Caco-2 (cell line): ENCODE measurements at regions of chr5 and their contacts with region 1.

Region 1: DNA sequence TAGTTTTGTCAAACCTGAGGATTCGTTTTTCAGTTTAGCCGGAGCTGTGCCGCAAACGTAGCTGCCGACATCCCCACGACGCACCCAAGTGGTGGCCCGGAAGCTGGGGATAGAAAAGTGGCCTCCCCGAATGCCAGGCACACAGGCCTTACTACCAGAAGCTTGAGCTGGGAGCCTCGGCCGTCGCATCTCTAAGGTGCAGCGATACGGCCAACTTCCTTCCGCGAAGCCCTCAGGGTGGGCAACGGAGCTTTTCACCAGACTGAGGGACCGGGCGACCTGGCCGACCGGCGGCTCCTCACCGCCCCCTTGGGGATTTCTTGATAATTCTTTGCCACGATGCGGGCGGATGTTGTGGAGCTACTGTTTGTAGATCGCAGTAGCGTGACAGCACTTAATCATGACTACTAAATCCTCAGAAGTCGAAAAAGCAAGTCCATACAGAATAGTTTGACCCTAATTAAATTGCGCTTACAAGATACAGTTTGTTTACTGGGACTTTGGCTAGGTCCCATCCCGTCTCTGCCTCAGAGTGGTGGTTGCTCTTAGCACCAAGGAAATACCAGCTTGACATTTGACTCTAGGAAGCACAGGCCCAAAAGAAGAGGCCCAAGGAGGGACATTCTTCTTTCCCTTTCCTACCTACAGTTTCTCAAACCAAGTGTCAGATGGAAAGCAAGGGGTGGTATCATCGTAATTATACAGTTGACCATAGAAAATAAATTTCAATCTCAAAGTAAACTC is 613 bp upstream of the TMEM267 start:
- DNase-seq: peak; percentile 83 to 91
- H3K4me3 ChIP-seq: peak overlapping the region; percentile 81
- H3K4me3 Mint-ChIP-seq: peak overlapping the region; percentile 95
- H3K27ac Mint-ChIP-seq: peak overlapping the region; percentile 99
- H3K4me1 ChIP-seq: peaks cover 3% of the 10 kb centered on the region; the same call in 1 of the 2 replicates
- H3K4me1 Mint-ChIP-seq: peaks cover 11% of the 10 kb centered on the region
- H3K27me3 ChIP-seq: no peaks in the 10 kb centered on the region
- H3K27me3 Mint-ChIP-seq: no peaks in the 10 kb centered on the region
- CTCF ChIP-seq: peak; percentile 75 to 82

Region 2: DNA sequence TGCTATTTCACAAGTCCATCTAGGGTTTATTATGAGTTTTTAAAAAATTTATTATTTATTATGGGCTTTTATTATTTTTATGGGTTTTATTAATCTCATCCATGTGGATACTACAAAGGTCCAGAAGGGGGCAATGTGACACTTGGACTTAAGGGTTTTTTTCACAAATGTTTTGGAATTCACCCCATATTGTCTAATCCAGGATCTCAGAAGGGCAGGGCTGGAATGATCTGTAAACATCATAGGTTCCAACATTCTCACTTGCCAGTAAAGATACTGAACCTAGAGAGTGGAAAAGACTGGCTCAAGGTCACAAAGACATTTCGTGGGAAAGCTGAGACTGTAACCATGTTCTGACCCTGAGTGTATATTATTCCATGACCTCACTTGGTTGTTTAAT is 256.6 kb before region 1 on chr5:
- CTCF ChIA-PET with region 1: no interaction called
- POLR2A ChIA-PET with region 1: no interaction called
- intact Hi-C with region 1: loop called (anchors 2 kb)
- DNase-seq: peak in 1 of 2 experiments; percentile 43
- H3K4me3 ChIP-seq: no peak overlapping the region
- H3K4me3 Mint-ChIP-seq: no peak overlapping the region
- H3K27ac Mint-ChIP-seq: no peak overlapping the region
- H3K4me1 ChIP-seq: no peaks in the 10 kb centered on the region
- H3K4me1 Mint-ChIP-seq: no peaks in the 10 kb centered on the region
- H3K27me3 ChIP-seq: no peaks in the 10 kb centered on the region
- H3K27me3 Mint-ChIP-seq: no peaks in the 10 kb centered on the region
- CTCF ChIP-seq: peak; percentile 52 to 67

Region 3: GRCh38 chr5:43313035-43313853 is 171.0 kb before region 1 on chr5 and contains the start of gene HMGCS1:
- CTCF ChIA-PET with region 1: interaction called, 15 read pairs
- POLR2A ChIA-PET with region 1: interaction called, 20 read pairs
- intact Hi-C with region 1: loop called (anchors 1 kb)
- DNase-seq: peak; percentile 99 to 100
- H3K4me3 ChIP-seq: peak within 1 kb of the TSS; percentile 56
- H3K4me3 Mint-ChIP-seq: peak within 1 kb of the TSS; percentile 99
- H3K27ac Mint-ChIP-seq: peak within 1 kb of the TSS; percentile 83
- H3K4me1 ChIP-seq: peaks cover 49% of the 10 kb centered on the region
- H3K4me1 Mint-ChIP-seq: peaks cover 34% of the 10 kb centered on the region
- H3K27me3 ChIP-seq: no peaks in the 10 kb centered on the region
- H3K27me3 Mint-ChIP-seq: no peaks in the 10 kb centered on the region
- CTCF ChIP-seq: no peak
- total RNA-seq, gene HMGCS1: 205 and 211 TPM in 2 replicates

Region 4: GRCh38 chr5:43396762-43397304 is 87.4 kb before region 1 on chr5:
- CTCF ChIA-PET with region 1: interaction called, 28 read pairs
- POLR2A ChIA-PET with region 1: interaction called, 14 read pairs
- intact Hi-C with region 1: loop called (anchors 1 kb)
- DNase-seq: peak; percentile 75 to 76
- H3K4me3 ChIP-seq: peak overlapping the region; percentile 71
- H3K4me3 Mint-ChIP-seq: peak overlapping the region; percentile 94
- H3K27ac Mint-ChIP-seq: peak overlapping the region; percentile 96
- H3K4me1 ChIP-seq: no peaks in the 10 kb centered on the region; the same call in 1 of the 2 replicates
- H3K4me1 Mint-ChIP-seq: no peaks in the 10 kb centered on the region
- H3K27me3 ChIP-seq: no peaks in the 10 kb centered on the region
- H3K27me3 Mint-ChIP-seq: no peaks in the 10 kb centered on the region
- CTCF ChIP-seq: no peak

Region 5: GRCh38 chr5:43422143-43422542 is 62.1 kb before region 1 on chr5:
- CTCF ChIA-PET with region 1: interaction called, 5 read pairs
- POLR2A ChIA-PET with region 1: interaction called, 12 read pairs
- intact Hi-C with region 1: loop called (anchors 2 kb)
- DNase-seq: peak in 1 of 2 experiments; percentile 17
- H3K4me3 ChIP-seq: no peak overlapping the region
- H3K4me3 Mint-ChIP-seq: no peak overlapping the region
- H3K27ac Mint-ChIP-seq: peak overlapping the region; percentile 2
- H3K4me1 ChIP-seq: peaks cover 9% of the 10 kb centered on the region
- H3K4me1 Mint-ChIP-seq: peaks cover 20% of the 10 kb centered on the region
- H3K27me3 ChIP-seq: no peaks in the 10 kb centered on the region
- H3K27me3 Mint-ChIP-seq: no peaks in the 10 kb centered on the region
- CTCF ChIP-seq: no peak

Region 6: DNA sequence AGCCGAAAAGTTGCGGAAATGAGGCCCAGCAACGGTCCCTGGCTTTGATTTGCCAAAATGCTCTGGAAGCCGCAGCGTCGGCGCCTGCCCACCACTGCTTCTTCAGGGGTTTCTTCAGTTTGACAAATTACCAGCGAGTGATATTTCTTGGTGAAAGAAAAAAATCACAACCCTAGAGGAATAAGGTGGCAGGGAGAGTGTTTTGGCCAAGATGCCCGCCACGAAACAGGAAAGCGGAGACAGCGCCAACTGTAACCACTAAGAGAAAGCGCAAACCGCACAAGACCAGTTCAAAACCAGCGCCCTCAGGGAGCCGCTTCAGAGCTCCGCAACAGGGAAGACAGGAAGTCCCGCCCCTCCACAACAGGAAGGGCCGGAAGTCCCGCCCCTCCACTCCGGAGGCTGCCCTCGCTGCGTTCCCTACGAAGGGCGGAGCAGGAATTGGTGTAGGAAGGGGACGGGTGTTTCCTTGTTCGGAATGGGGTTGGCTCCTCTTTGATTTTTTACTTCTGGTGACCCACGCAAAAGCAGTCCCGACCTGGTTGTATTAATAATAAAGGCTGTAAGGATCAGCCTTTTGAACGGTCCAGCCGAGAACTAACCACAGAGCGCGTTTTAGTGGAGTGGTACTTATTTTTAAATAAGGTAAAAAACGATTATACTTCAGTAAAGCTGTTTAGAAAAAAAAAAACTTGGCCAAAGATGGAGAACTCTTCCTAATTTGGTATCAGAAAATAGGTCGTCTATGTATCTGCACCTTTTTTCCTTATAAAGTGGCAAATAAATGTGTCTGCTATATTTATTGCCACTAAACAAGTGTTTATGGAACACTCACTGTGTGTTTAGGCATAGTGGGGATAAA is 30.8 kb after region 1 on chr5 and contains the start of gene C5orf34:
- CTCF ChIA-PET with region 1: interaction called, 16 read pairs
- POLR2A ChIA-PET with region 1: interaction called, 26 read pairs
- intact Hi-C with region 1: loop called (anchors 1 kb)
- DNase-seq: peak; percentile 96 to 97
- H3K4me3 ChIP-seq: peak within 1 kb of the TSS; percentile 49
- H3K4me3 Mint-ChIP-seq: peak within 1 kb of the TSS; percentile 75
- H3K27ac Mint-ChIP-seq: peak within 1 kb of the TSS; percentile 23
- H3K4me1 ChIP-seq: peaks cover 13% of the 10 kb centered on the region; the same call in 1 of the 2 replicates
- H3K4me1 Mint-ChIP-seq: peaks cover 22% of the 10 kb centered on the region
- H3K27me3 ChIP-seq: no peaks in the 10 kb centered on the region
- H3K27me3 Mint-ChIP-seq: no peaks in the 10 kb centered on the region
- CTCF ChIP-seq: no peak
- total RNA-seq, gene C5orf34: 7.0 and 7.1 TPM in 2 replicates

Region 7: DNA sequence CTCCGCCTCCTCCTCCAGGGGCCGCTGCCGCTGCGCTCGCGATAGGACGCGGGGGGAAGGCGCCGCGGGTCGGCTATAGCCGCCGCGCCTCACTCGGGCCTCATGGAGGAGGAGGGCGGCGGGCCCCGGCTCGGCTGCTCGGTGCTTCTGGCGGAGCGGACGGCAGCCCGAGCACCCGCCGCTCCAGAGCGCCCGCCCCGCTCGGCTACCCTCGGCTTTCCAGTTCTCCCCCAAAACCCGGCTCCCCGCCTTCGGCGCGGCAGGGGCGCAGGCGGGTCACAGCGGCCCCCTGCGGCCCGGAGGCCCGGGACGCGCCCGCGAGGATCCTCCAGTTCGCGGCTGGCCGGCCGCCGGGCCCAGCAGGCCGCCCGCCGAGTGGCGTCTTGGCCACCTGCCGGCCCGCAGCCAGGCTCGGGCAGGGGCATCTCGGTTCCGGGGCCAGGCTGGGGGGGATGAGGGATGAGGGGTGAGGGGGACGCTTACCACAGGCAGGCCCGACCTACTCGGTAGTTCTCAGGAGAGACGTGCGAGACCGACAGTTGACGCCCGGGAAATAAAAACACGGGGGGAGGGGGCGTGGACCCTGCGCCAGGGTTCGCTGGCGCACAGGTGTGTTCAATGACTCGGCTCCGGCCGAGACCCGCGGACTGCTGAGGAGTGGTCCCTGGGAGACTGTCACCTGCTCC is 72.7 kb after region 1 on chr5 and contains the start of gene PAIP1:
- CTCF ChIA-PET with region 1: interaction called, 11 read pairs
- POLR2A ChIA-PET with region 1: interaction called, 5 read pairs
- intact Hi-C with region 1: loop called (anchors 2 kb)
- DNase-seq: peak; percentile 91 to 93
- H3K4me3 ChIP-seq: peak within 1 kb of the TSS; percentile 90
- H3K4me3 Mint-ChIP-seq: peak within 1 kb of the TSS; percentile 72
- H3K27ac Mint-ChIP-seq: peak within 1 kb of the TSS; percentile 94
- H3K4me1 ChIP-seq: no peaks in the 10 kb centered on the region
- H3K4me1 Mint-ChIP-seq: no peaks in the 10 kb centered on the region
- H3K27me3 ChIP-seq: no peaks in the 10 kb centered on the region
- H3K27me3 Mint-ChIP-seq: no peaks in the 10 kb centered on the region
- CTCF ChIP-seq: peak; percentile 56 to 70
- total RNA-seq, gene PAIP1: 115 and 121 TPM in 2 replicates

Region 8: GRCh38 chr5:43973318-43973717 is 489.0 kb after region 1 on chr5:
- CTCF ChIA-PET with region 1: no interaction called
- POLR2A ChIA-PET with region 1: no interaction called
- intact Hi-C with region 1: no loop called
- DNase-seq: peak in 1 of 2 experiments; percentile 5
- H3K4me3 ChIP-seq: no peak overlapping the region
- H3K4me3 Mint-ChIP-seq: no peak overlapping the region
- H3K27ac Mint-ChIP-seq: no peak overlapping the region
- H3K4me1 ChIP-seq: no peaks in the 10 kb centered on the region
- H3K4me1 Mint-ChIP-seq: no peaks in the 10 kb centered on the region
- H3K27me3 ChIP-seq: no peaks in the 10 kb centered on the region
- H3K27me3 Mint-ChIP-seq: no peaks in the 10 kb centered on the region
- CTCF ChIP-seq: no peak